ENCODE measurements at regions of chr11 and their contacts with region 1.

Region 1: GRCh38 chr11:40045312-40045711 is 1414.1 kb downstream of the LRRC4C start:
- DNase-seq: no peak
- H3K4me3 ChIP-seq: no peak overlapping the region
- H3K27ac ChIP-seq: no peak overlapping the region
- H3K4me1 ChIP-seq: no peaks in the 10 kb centered on the region
- H3K27me3 ChIP-seq: no peaks in the 10 kb centered on the region
- CTCF ChIP-seq: no peak

Region 2: DNA sequence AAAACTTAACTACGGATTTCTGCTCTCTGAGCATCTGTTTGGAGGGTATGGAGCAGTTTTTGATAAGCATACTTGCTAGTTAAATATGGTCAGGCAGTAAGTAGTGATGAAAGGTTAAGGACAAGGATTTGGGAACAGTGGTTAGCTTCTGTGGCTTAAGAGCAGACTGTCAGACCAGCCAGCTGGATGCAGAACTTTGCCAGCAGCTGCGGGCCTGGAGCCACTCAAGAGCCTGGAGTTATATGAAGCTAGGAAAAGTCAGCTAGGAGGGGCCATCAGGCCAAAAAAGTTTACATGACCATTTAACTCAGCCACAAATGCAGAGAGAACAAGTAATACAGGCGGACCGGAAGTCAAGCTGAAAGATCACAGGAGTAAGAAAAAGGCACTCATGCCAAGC is 403.6 kb before region 1 on chr11:
- CTCF ChIA-PET with region 1: no interaction called
- dilution Hi-C with region 1: no loop called
- in situ Hi-C with region 1: no loop called
- intact Hi-C with region 1: no loop called
- DNase-seq: no peak
- H3K4me3 ChIP-seq: no peak overlapping the region
- H3K27ac ChIP-seq: no peak overlapping the region
- H3K4me1 ChIP-seq: no peaks in the 10 kb centered on the region
- H3K27me3 ChIP-seq: no peaks in the 10 kb centered on the region
- CTCF ChIP-seq: no peak

Region 3: DNA sequence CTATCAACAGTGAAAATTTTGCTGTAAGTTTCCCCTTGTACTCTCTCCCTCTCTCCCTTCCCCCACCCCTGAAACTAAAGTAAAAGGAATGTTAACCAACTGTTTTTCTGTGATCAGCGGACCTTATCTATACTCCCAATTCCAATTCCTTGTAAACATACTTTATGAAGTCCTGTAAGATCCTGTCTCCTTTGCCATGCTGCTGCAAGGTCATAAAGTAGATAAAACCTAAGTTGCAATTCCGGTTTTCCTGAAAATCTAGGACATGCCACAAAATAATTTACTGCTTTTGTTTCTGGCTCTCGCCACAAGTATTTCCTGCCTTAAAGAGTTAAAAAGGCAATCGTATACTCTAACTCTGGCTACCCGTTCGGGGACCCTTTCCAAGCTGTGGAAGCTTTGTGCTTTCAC is 54.9 kb before region 1 on chr11:
- CTCF ChIA-PET with region 1: no interaction called
- dilution Hi-C with region 1: loop called (anchors 5 kb)
- in situ Hi-C with region 1: no loop called
- intact Hi-C with region 1: no loop called
- DNase-seq: no peak
- H3K4me3 ChIP-seq: no peak overlapping the region
- H3K27ac ChIP-seq: no peak overlapping the region
- H3K4me1 ChIP-seq: no peaks in the 10 kb centered on the region
- H3K27me3 ChIP-seq: no peaks in the 10 kb centered on the region
- CTCF ChIP-seq: no peak

Measured in mammary epithelial cell (primary cell).